Activated naive CD8-positive, alpha-beta T cell treated with anti-CD3 and anti-CD28 coated beads, Interleukin-2, amount 10 ng/mL, durations not matched to agents 7 days and 5 days (primary cell): ENCODE measurements at regions of chr6 and their contacts with region 1.

Region 1: DNA sequence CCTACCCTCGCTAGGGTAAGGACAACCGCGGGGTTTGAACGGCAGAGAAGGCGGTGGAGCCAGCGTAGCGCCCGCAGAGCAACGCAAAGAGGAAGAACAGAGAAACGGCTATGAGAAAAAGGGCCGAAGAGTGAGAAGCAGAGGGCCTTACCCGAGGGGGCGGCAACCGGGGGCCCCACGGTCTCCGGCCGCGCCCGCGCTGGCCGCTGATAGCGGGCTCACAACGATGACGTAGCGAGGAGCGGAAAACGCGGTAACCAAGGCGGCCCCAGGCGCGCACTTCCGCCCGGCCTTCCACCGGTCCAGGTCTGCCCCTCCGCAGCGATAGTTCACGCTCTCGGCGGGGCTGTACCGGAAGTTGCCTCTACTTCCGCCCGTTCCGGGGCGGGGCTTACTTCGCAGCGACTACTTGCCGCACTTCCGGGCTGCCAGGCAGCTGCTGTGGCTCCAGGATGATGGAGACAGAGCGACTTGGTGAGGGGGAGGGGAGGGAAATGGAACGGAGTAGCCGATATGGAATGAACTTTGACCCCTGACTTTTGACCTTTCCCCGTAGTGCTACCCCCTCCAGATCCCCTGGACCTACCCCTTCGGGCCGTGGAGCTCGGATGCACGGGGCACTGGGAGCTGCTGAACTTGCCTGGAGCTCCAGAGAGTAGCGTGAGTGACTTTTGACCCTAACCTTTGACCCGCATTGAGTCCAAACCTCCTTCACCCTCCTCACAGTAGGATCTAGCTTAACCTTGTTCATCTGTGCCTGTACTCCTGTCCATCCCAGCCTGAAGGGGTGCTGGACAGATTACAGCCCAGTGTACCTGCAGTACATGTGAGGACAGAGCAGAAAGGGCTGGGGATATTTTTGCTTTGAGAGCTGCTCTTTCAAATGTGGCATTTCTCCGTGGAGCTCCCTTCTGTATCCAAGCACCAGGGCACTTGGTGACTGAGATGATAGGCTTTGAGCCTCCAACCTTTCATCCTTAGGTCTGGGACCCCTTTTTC is at the starts of genes NELFE and SKIC2:
- DNase-seq: peak; percentile 99
- ATAC-seq: peak; percentile 97
- H3K4me3 Mint-ChIP-seq: peak within 1 kb of the TSS; percentile 97
- H3K27ac Mint-ChIP-seq: peak within 1 kb of the TSS; percentile 98
- H3K4me1 Mint-ChIP-seq: peaks cover 24% of the 10 kb centered on the region
- H3K27me3 Mint-ChIP-seq: no peaks in the 10 kb centered on the region
- total RNA-seq, gene NELFE: 61.3 to 62.5 TPM
- total RNA-seq, gene SKIC2: 102 to 112 TPM

Region 2: DNA sequence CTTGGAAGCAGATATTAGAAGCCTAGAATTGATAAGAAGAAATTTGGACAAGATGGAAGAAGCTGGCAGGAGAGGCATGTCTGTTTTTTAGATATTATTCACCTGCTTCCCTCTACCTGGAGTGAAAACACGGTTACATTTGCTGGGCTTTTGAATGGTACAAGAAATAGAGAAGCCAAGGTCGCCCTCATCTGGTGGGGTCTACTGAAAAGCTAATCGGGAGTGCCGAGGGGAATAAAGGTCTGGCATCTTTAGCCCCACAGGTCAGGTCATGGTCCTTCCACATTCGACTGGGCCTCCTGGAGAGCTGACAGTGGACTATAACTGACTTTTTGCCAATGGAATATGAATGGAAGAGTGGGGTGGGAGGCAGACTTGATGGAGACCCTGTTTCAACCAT is 36.1 kb before region 1 on chr6:
- POLR2A ChIA-PET with region 1: no interaction called
- DNase-seq: no peak
- ATAC-seq: peak; percentile 34
- H3K4me3 Mint-ChIP-seq: no peak overlapping the region
- H3K27ac Mint-ChIP-seq: no peak overlapping the region
- H3K4me1 Mint-ChIP-seq: no peaks in the 10 kb centered on the region
- H3K27me3 Mint-ChIP-seq: peaks cover 8% of the 10 kb centered on the region

Region 3: GRCh38 chr6:31971993-31972708 is 13.1 kb after region 1 on chr6 and contains the start of gene DXO:
- POLR2A ChIA-PET with region 1: interaction called, 91 read pairs
- DNase-seq: peak; percentile 98
- ATAC-seq: peak; percentile 96
- H3K4me3 Mint-ChIP-seq: peak within 1 kb of the TSS; percentile 97
- H3K27ac Mint-ChIP-seq: peak within 1 kb of the TSS; percentile 99
- H3K4me1 Mint-ChIP-seq: peaks cover 25% of the 10 kb centered on the region
- H3K27me3 Mint-ChIP-seq: no peaks in the 10 kb centered on the region
- total RNA-seq, gene DXO: 22.4 to 28.6 TPM

Region 4: GRCh38 chr6:32267035-32267434 is 308.0 kb after region 1 on chr6:
- POLR2A ChIA-PET with region 1: no interaction called
- DNase-seq: no peak
- ATAC-seq: no peak
- H3K4me3 Mint-ChIP-seq: no peak overlapping the region
- H3K27ac Mint-ChIP-seq: no peak overlapping the region
- H3K4me1 Mint-ChIP-seq: peaks cover 12% of the 10 kb centered on the region
- H3K27me3 Mint-ChIP-seq: peaks cover 5% of the 10 kb centered on the region

Region 5: GRCh38 chr6:32879691-32880090 is 920.7 kb after region 1 on chr6:
- POLR2A ChIA-PET with region 1: no interaction called
- DNase-seq: no peak
- ATAC-seq: no peak
- H3K4me3 Mint-ChIP-seq: no peak overlapping the region
- H3K27ac Mint-ChIP-seq: no peak overlapping the region
- H3K4me1 Mint-ChIP-seq: peaks cover 3% of the 10 kb centered on the region
- H3K27me3 Mint-ChIP-seq: no peaks in the 10 kb centered on the region